Activated naive CD4-positive, alpha-beta T cell treated with anti-CD3 and anti-CD28 coated beads for 36 hours (primary cell): ENCODE measurements at regions of chr12 and their contacts with region 1.

Region 1: GRCh38 chr12:47190271-47190750 is 110.6 kb upstream of the AMIGO2 start:
- DNase-seq: peak; percentile 75
- H3K4me3 Mint-ChIP-seq: peak overlapping the region; percentile 48
- H3K27ac Mint-ChIP-seq: peak overlapping the region; percentile 92
- H3K4me1 Mint-ChIP-seq: peaks cover 88% of the 10 kb centered on the region
- H3K27me3 Mint-ChIP-seq: no peaks in the 10 kb centered on the region

Region 2: DNA sequence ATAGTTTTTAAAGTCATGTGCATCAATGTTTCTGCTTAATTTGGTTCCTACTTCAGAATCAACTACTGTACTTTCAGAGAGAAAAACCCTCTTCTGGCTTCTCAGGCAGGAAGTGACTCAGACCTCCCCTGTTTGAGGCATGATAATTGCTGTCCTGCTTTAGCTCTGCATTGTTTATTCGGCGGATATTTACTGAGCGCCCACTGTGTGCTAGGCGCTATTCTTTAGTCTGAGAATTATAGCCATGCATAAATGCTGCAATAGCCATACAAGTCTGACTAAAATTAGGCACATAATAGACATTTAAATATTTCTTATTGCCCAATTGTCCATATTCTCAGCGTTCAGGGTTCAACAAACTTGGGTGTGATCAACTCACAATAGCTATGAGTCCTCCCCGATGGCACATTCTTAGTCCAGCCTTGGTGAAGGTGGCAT is 104.5 kb before region 1 on chr12:
- CTCF ChIA-PET with region 1: interaction called, 5 read pairs
- intact Hi-C with region 1: loop called (anchors 2 kb)
- DNase-seq: peak; percentile 63
- H3K4me3 Mint-ChIP-seq: no peak overlapping the region
- H3K27ac Mint-ChIP-seq: peak overlapping the region; percentile 41
- H3K4me1 Mint-ChIP-seq: peaks cover 54% of the 10 kb centered on the region
- H3K27me3 Mint-ChIP-seq: no peaks in the 10 kb centered on the region

Region 3: GRCh38 chr12:47121146-47121545 is 69.2 kb before region 1 on chr12:
- CTCF ChIA-PET with region 1: interaction called, 3 read pairs
- intact Hi-C with region 1: loop called (anchors 2 kb)
- DNase-seq: no peak
- H3K4me3 Mint-ChIP-seq: no peak overlapping the region
- H3K27ac Mint-ChIP-seq: peak overlapping the region; percentile 79
- H3K4me1 Mint-ChIP-seq: peaks cover 41% of the 10 kb centered on the region
- H3K27me3 Mint-ChIP-seq: no peaks in the 10 kb centered on the region

Region 4: GRCh38 chr12:47307680-47308399 is 117.5 kb after region 1 on chr12:
- CTCF ChIA-PET with region 1: interaction called, 3 read pairs
- intact Hi-C with region 1: loop called (anchors 1 kb)
- DNase-seq: peak; percentile 74
- H3K4me3 Mint-ChIP-seq: peak overlapping the region; percentile 91
- H3K27ac Mint-ChIP-seq: peak overlapping the region; percentile 98
- H3K4me1 Mint-ChIP-seq: peaks cover 73% of the 10 kb centered on the region
- H3K27me3 Mint-ChIP-seq: no peaks in the 10 kb centered on the region

Region 5: DNA sequence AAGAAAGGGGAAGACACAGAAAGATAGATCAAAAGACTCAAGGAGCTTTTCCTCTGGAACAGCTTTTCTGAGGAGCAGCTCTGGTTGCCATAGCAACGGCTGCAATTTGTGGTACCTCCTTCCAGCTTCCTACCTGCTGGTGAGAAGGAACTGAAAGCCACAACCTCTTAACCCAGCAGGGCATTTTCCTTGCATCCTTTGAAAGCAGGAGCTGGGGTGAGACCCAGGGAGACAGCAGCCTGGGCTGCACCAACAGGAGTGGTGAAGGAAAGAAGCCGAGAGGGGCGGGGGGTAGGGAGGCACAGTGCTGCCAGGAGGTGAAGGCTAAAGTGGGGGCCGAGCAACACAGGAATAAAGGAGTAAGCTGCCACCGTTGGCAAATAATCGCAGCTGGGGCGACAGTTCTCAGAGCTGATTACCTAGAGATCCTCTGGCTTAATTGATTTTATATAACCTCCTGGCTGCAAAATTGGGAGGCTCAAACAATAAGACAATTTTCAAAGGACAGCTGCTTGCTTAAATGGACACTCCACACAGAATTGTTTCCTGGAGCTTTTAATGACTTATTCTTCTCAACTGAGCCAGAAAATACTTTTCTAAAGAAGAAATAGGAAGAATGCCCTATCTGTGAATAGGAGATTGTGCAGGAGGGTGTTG is 386.1 kb after region 1 on chr12:
- CTCF ChIA-PET with region 1: no interaction called
- intact Hi-C with region 1: loop called (anchors 1 kb)
- DNase-seq: no peak
- H3K4me3 Mint-ChIP-seq: no peak overlapping the region
- H3K27ac Mint-ChIP-seq: no peak overlapping the region
- H3K4me1 Mint-ChIP-seq: peaks cover 30% of the 10 kb centered on the region
- H3K27me3 Mint-ChIP-seq: no peaks in the 10 kb centered on the region